CD8-positive, alpha-beta T cell (primary cell): ENCODE measurements at regions of chr3 and their contacts with region 1.

Region 1: GRCh38 chr3:183377307-183377959 is 51.0 kb downstream of the MCF2L2 start:
- DNase-seq: no peak
- ATAC-seq: peak; percentile 50
- H3K4me3 ChIP-seq: no peak overlapping the region
- H3K4me3 Mint-ChIP-seq: no peak overlapping the region
- H3K27ac ChIP-seq: no peak overlapping the region
- H3K27ac Mint-ChIP-seq: no peak overlapping the region
- H3K4me1 ChIP-seq: no peaks in the 10 kb centered on the region
- H3K4me1 Mint-ChIP-seq: no peaks in the 10 kb centered on the region
- H3K27me3 ChIP-seq: no peaks in the 10 kb centered on the region
- H3K27me3 Mint-ChIP-seq: no peaks in the 10 kb centered on the region
- CTCF ChIP-seq: no peak

Region 2: GRCh38 chr3:183122257-183122932 is 255.0 kb before region 1 on chr3:
- CTCF ChIA-PET with region 1: interaction called, 156 read pairs
- POLR2A ChIA-PET with region 1: no interaction called
- intact Hi-C with region 1: loop called (anchors 1 kb)
- DNase-seq: peak in 2 of 9 experiments; percentile 58 to 69
- ATAC-seq: peak; percentile 65
- H3K4me3 ChIP-seq: no peak overlapping the region
- H3K4me3 Mint-ChIP-seq: no peak overlapping the region
- H3K27ac ChIP-seq: no peak overlapping the region
- H3K27ac Mint-ChIP-seq: no peak overlapping the region
- H3K4me1 ChIP-seq: no peaks in the 10 kb centered on the region
- H3K4me1 Mint-ChIP-seq: no peaks in the 10 kb centered on the region
- H3K27me3 ChIP-seq: no peaks in the 10 kb centered on the region
- H3K27me3 Mint-ChIP-seq: peaks cover 6% of the 10 kb centered on the region
- CTCF ChIP-seq: peak; percentile 93

Region 3: DNA sequence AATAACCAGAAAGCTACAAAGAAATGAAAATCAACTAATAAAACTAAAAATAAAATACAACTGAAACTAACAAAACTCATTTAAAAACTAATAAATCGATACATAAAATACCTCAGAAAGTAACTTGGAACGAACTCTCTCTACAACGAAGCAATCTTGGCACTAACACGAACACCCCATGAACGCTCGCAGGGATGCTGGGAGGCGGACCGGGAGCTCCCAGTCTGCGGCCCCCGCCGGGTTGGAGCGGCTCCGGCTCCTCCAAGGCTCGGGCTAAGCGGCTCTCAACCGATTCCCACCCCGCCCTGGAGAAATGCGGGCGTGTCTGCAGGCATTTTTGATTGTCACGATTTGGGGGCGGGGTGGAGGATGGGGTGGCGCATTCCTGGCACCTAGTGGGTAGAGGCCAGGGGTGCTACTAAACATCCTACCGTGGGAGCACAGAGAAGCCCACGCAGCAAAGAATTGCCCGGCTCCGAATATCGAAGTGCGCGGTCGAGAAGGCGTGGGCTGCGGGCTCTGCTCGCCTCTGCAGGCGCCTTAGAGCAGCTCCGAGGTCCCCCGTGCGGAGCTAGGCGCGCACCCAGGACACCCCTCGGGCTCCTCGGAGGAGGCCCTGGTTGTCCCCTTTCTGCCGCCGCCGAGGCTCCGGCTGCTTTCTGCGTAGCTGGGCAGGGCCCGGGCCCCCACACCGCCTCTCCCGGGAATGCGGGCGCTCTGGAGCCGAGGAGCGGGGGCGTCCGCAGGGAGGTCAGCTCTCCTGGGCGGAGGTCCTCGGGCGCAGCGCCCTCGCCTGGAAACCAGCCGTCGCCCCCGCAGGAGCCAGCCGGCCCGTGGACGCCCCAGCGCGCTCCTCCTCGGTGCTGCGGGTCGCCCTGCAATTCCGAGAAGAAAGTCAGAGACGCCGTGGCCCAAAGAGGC is 198.5 kb before region 1 on chr3:
- CTCF ChIA-PET with region 1: interaction called, 188 read pairs
- POLR2A ChIA-PET with region 1: no interaction called
- intact Hi-C with region 1: loop called in 1 of 2 experiments (anchors 1 kb)
- DNase-seq: peak in 6 of 9 experiments; percentile 32 to 56 (median 44)
- ATAC-seq: peak; percentile 69
- H3K4me3 ChIP-seq: peak overlapping the region; percentile 43 to 54
- H3K4me3 Mint-ChIP-seq: peak overlapping the region; percentile 71
- H3K27ac ChIP-seq: no peak overlapping the region
- H3K27ac Mint-ChIP-seq: no peak overlapping the region
- H3K4me1 ChIP-seq: peaks cover 4% of the 10 kb centered on the region
- H3K4me1 Mint-ChIP-seq: peaks cover 8% of the 10 kb centered on the region
- H3K27me3 ChIP-seq: peaks cover 11 to 13% of the 10 kb centered on the region in 2 experiments
- H3K27me3 Mint-ChIP-seq: peaks cover 29% of the 10 kb centered on the region
- CTCF ChIP-seq: no peak

Region 4: DNA sequence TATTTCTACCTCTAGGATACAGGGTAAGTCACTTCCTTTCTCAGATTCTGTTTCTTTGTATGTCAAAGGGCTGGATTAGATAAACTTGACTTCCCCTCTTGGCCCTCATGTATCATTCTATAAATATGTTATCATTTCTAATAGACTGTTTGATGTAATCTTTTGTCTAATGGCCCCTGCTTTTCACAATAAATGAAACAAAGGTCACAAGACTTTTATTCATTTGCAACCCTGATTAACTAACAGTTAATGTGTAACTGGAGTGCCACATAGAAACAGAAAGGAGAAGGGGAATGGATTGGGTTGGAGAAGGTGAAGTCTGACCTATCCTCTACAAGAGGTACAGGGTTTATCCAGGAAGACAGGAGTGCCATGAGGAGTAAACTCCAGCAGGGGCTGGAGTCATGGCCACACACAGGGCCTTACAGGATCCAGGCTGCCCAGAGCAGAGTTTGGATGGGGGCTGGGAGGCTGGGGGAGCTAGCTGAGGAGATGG is 132.4 kb before region 1 on chr3:
- CTCF ChIA-PET with region 1: no interaction called
- POLR2A ChIA-PET with region 1: no interaction called
- intact Hi-C with region 1: loop called (anchors 1 to 10 kb)
- DNase-seq: no peak
- ATAC-seq: no peak
- H3K4me3 ChIP-seq: no peak overlapping the region
- H3K4me3 Mint-ChIP-seq: no peak overlapping the region
- H3K27ac ChIP-seq: no peak overlapping the region
- H3K27ac Mint-ChIP-seq: no peak overlapping the region
- H3K4me1 ChIP-seq: no peaks in the 10 kb centered on the region
- H3K4me1 Mint-ChIP-seq: no peaks in the 10 kb centered on the region
- H3K27me3 ChIP-seq: no peaks in the 10 kb centered on the region
- H3K27me3 Mint-ChIP-seq: peaks cover 4% of the 10 kb centered on the region
- CTCF ChIP-seq: no peak

Region 5: DNA sequence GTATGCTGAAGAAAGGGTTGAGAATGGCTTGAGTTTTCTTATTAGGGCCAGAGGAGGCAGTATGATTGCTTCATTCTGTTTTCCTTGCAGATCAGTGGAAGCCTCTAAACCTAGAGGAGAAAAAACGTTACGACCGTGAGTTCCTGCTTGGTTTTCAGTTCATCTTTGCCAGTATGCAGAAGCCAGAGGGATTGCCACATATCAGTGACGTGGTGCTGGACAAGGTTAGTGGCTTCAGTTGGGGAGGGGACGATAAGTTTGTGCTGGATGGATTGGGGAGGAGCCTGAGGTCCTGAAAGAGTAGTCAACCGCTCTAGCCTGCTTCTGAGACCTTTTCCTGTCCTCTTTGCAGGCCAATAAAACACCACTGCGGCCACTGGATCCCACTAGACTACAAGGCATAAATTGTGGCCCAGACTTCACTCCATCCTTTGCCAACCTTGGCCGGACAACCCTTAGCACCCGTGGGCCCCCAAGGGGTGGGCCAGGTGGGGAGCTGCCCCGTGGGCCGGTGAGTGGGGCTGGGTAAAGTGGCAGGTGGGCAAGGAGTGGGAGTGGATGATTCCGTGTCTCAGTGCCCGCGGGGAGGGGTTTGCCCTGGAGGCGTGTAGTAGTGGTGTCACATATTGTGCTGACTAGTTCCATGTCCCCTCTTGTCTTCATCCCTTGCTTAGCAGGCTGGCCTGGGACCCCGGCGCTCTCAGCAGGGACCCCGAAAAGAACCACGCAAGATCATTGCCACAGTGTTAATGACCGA is 945.5 kb after region 1 on chr3:
- CTCF ChIA-PET with region 1: no interaction called
- POLR2A ChIA-PET with region 1: no interaction called
- intact Hi-C with region 1: no loop called
- DNase-seq: peak in 1 of 9 experiments; percentile 33
- ATAC-seq: no peak
- H3K4me3 ChIP-seq: no peak overlapping the region
- H3K4me3 Mint-ChIP-seq: no peak overlapping the region
- H3K27ac ChIP-seq: no peak overlapping the region
- H3K27ac Mint-ChIP-seq: no peak overlapping the region
- H3K4me1 ChIP-seq: no peaks in the 10 kb centered on the region
- H3K4me1 Mint-ChIP-seq: peaks cover 9% of the 10 kb centered on the region
- H3K27me3 ChIP-seq: no peaks in the 10 kb centered on the region
- H3K27me3 Mint-ChIP-seq: no peaks in the 10 kb centered on the region
- CTCF ChIP-seq: no peak